ENCODE measurements at regions of chr6 and their contacts with region 1.

Region 1: GRCh38 chr6:27518881-27519795 is 46.2 kb upstream of the ZNF184 start:
- DNase-seq: peak; percentile 92
- ATAC-seq: peak; percentile 89
- H3K4me3 ChIP-seq: peak overlapping the region; percentile 60 to 75
- H3K27ac ChIP-seq: peak overlapping the region; percentile 70
- H3K4me1 ChIP-seq: peaks cover 0 to 15% of the 10 kb centered on the region in 2 experiments; a peak in 2 of 4 replicates
- H3K27me3 ChIP-seq: no peaks in the 10 kb centered on the region
- CTCF ChIP-seq: peak; percentile 70 to 81 (median 75); a peak in 5 of 6 replicates
- POLR2A ChIP-seq: no peak
- RAD21 ChIP-seq: peak; percentile 70

Region 2: DNA sequence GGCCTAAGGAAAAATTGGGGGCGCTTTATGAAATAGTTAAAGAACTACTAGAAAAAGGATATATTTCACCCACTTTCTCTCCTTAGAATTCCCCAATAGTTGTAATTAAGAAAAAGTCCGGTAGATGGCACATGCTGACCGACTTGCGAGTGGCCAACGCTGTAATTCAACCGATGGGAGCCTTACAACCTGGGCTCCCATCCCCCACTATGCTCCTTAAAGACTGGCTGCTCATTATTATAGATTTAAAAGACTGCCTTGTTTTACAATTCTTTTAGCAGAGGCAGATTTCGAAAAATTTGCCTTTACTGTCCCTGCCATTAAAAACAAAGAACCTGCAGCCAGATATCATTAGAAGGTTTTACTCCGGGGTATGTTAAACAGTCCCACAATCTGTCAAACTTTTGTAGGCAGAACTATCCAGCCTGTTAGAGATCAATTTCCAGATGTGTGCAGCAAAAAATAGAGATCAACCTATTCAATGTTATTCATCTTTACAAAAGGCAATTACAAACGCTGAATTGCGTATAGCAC is 330.2 kb before region 1 on chr6:
- CTCF ChIA-PET with region 1: no interaction called
- POLR2A ChIA-PET with region 1: interaction called, 3 read pairs
- RAD21 ChIA-PET with region 1: no interaction called
- intact Hi-C with region 1: loop called (anchors 2 kb)
- DNase-seq: peak; percentile 64
- ATAC-seq: peak; percentile 91
- H3K4me3 ChIP-seq: peak overlapping the region; percentile 61 to 62
- H3K27ac ChIP-seq: peak overlapping the region; percentile 61
- H3K4me1 ChIP-seq: peaks cover 2 to 13% of the 10 kb centered on the region in 2 experiments; a peak in 3 of 4 replicates
- H3K27me3 ChIP-seq: no peaks in the 10 kb centered on the region
- CTCF ChIP-seq: peak; percentile 50 to 85 (median 70); a peak in 5 of 6 replicates
- POLR2A ChIP-seq: no peak
- RAD21 ChIP-seq: peak; percentile 95

Region 3: GRCh38 chr6:27503436-27504030 is 15.6 kb before region 1 on chr6:
- CTCF ChIA-PET with region 1: interaction called, 11 read pairs
- POLR2A ChIA-PET with region 1: no interaction called
- RAD21 ChIA-PET with region 1: no interaction called
- intact Hi-C with region 1: loop called (anchors 1 kb)
- DNase-seq: peak; percentile 72
- ATAC-seq: peak; percentile 51
- H3K4me3 ChIP-seq: peak overlapping the region; percentile 51 to 59
- H3K27ac ChIP-seq: peak overlapping the region; percentile 42
- H3K4me1 ChIP-seq: peaks cover 9 to 34% of the 10 kb centered on the region in 2 experiments; a peak in 3 of 4 replicates
- H3K27me3 ChIP-seq: no peaks in the 10 kb centered on the region
- CTCF ChIP-seq: no peak
- POLR2A ChIP-seq: no peak
- RAD21 ChIP-seq: no peak

Region 4: GRCh38 chr6:27532820-27533538 is 13.8 kb after region 1 on chr6:
- CTCF ChIA-PET with region 1: interaction called, 7 read pairs
- POLR2A ChIA-PET with region 1: interaction called, 3 read pairs
- RAD21 ChIA-PET with region 1: no interaction called
- intact Hi-C with region 1: loop called (anchors 2 kb)
- DNase-seq: peak; percentile 68
- ATAC-seq: peak; percentile 84
- H3K4me3 ChIP-seq: peak overlapping the region; percentile 27 to 49
- H3K27ac ChIP-seq: peak overlapping the region; percentile 54
- H3K4me1 ChIP-seq: peaks cover 21 to 33% of the 10 kb centered on the region in 2 experiments
- H3K27me3 ChIP-seq: no peaks in the 10 kb centered on the region
- CTCF ChIP-seq: no peak
- POLR2A ChIP-seq: no peak
- RAD21 ChIP-seq: no peak

Region 5: GRCh38 chr6:27547157-27548075 is 28.3 kb after region 1 on chr6:
- CTCF ChIA-PET with region 1: interaction called, 3 read pairs
- POLR2A ChIA-PET with region 1: no interaction called
- RAD21 ChIA-PET with region 1: no interaction called
- intact Hi-C with region 1: loop called (anchors 1 kb)
- DNase-seq: peak; percentile 74
- ATAC-seq: peak; percentile 50
- H3K4me3 ChIP-seq: peak overlapping the region; percentile 34 to 47
- H3K27ac ChIP-seq: peak overlapping the region; percentile 50; the same call in 1 of the 2 replicates
- H3K4me1 ChIP-seq: peaks cover 10 to 55% of the 10 kb centered on the region in 2 experiments
- H3K27me3 ChIP-seq: no peaks in the 10 kb centered on the region
- CTCF ChIP-seq: no peak
- POLR2A ChIP-seq: no peak
- RAD21 ChIP-seq: no peak

Region 6: GRCh38 chr6:27608916-27609883 is 90.1 kb after region 1 on chr6:
- CTCF ChIA-PET with region 1: interaction called, 9 read pairs
- POLR2A ChIA-PET with region 1: no interaction called
- RAD21 ChIA-PET with region 1: no interaction called
- intact Hi-C with region 1: loop called (anchors 1 kb)
- DNase-seq: peak; percentile 72
- ATAC-seq: peak; percentile 62
- H3K4me3 ChIP-seq: no peak overlapping the region
- H3K27ac ChIP-seq: peak overlapping the region; percentile 47; the same call in 1 of the 2 replicates
- H3K4me1 ChIP-seq: peaks cover 9 to 36% of the 10 kb centered on the region in 2 experiments
- H3K27me3 ChIP-seq: no peaks in the 10 kb centered on the region
- CTCF ChIP-seq: peak; percentile 75 to 91 (median 83)
- POLR2A ChIP-seq: no peak
- RAD21 ChIP-seq: peak; percentile 85

Region 7: GRCh38 chr6:27687154-27688013 is 168.2 kb after region 1 on chr6:
- CTCF ChIA-PET with region 1: interaction called, 6 read pairs
- POLR2A ChIA-PET with region 1: interaction called, 4 read pairs
- RAD21 ChIA-PET with region 1: no interaction called
- intact Hi-C with region 1: loop called (anchors 5 kb)
- DNase-seq: peak; percentile 79
- ATAC-seq: peak; percentile 70
- H3K4me3 ChIP-seq: peak overlapping the region; percentile 54 to 56
- H3K27ac ChIP-seq: peak overlapping the region; percentile 54
- H3K4me1 ChIP-seq: peaks cover 15 to 31% of the 10 kb centered on the region in 2 experiments
- H3K27me3 ChIP-seq: no peaks in the 10 kb centered on the region
- CTCF ChIP-seq: peak; percentile 55 to 81 (median 79); a peak in 5 of 6 replicates
- POLR2A ChIP-seq: no peak
- RAD21 ChIP-seq: peak; percentile 76